ENCODE measurements at regions of chr5 and their contacts with region 1.

Region 1: GRCh38 chr5:170100066-170100943 is 5.4 kb upstream of the FOXI1 start:
- DNase-seq: peak; percentile 80 to 93
- H3K4me3 ChIP-seq: no peak overlapping the region
- H3K27ac ChIP-seq: no peak overlapping the region
- H3K4me1 ChIP-seq: peaks cover 0 to 2% (median 0%) of the 10 kb centered on the region in 4 experiments; a peak in 1 of 7 replicates
- H3K27me3 ChIP-seq: 0 out of 7 replicates have a peak, but pooled peaks cover 0 to 7% (median 0%) of the 10 kb centered on the region in 4 experiments
- CTCF ChIP-seq: peak; percentile 11 to 93 (median 68)
- EP300 ChIP-seq: no peak
- POLR2A ChIP-seq: no peak
- RAD21 ChIP-seq: peak; percentile 94 to 98

Region 2: DNA sequence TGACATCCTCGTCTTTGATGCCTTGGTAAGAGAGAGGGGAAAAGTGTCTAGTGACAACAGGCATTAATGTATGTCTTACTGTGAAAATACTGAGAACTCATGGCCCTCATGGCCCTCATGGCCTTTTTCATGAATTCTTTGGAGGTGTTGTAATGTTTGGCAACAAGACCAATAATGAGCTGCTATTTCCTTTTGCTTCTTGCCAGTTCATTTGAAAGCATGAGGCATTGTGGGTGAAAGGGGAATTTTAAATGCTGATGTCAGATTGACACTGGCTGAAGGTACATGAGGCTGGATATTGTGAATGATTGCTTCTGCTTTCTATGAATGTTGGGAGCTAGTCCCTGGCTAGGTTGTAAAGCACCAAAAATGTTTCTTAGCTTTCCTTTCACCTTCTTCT is 384.0 kb before region 1 on chr5:
- CTCF ChIA-PET with region 1: no interaction called
- POLR2A ChIA-PET with region 1: no interaction called
- DNase-seq: no peak
- H3K4me3 ChIP-seq: no peak overlapping the region
- H3K27ac ChIP-seq: no peak overlapping the region
- H3K4me1 ChIP-seq: no peaks in the 10 kb centered on the region
- H3K27me3 ChIP-seq: no peaks in the 10 kb centered on the region
- CTCF ChIP-seq: no peak
- EP300 ChIP-seq: no peak
- POLR2A ChIP-seq: no peak
- RAD21 ChIP-seq: no peak

Region 3: DNA sequence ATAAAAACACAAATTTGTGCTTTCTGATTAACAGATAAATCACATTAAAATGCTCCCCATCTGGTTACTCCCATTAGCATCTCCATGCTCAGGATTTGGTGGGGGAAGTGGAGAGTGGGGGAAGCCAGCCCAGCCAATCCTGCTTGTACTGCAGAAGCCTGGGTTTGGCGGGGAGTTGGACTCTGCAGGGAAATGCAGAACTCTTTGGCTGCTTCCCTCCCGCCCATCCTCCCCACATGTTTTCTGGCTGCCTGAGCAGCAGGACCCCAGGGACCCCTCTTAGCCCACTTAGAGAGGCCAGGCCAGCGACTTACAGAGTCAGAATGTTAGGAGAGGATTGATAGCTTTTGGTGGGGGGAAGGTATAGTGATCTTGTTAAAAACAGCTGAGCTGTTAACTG is 54.1 kb before region 1 on chr5:
- CTCF ChIA-PET with region 1: no interaction called
- POLR2A ChIA-PET with region 1: no interaction called
- DNase-seq: no peak
- H3K4me3 ChIP-seq: no peak overlapping the region
- H3K27ac ChIP-seq: no peak overlapping the region
- H3K4me1 ChIP-seq: peaks cover 0 to 4% (median 3%) of the 10 kb centered on the region in 4 experiments; a peak in 3 of 7 replicates
- H3K27me3 ChIP-seq: no peaks in the 10 kb centered on the region
- CTCF ChIP-seq: no peak
- EP300 ChIP-seq: no peak
- POLR2A ChIP-seq: no peak
- RAD21 ChIP-seq: no peak

Region 4: DNA sequence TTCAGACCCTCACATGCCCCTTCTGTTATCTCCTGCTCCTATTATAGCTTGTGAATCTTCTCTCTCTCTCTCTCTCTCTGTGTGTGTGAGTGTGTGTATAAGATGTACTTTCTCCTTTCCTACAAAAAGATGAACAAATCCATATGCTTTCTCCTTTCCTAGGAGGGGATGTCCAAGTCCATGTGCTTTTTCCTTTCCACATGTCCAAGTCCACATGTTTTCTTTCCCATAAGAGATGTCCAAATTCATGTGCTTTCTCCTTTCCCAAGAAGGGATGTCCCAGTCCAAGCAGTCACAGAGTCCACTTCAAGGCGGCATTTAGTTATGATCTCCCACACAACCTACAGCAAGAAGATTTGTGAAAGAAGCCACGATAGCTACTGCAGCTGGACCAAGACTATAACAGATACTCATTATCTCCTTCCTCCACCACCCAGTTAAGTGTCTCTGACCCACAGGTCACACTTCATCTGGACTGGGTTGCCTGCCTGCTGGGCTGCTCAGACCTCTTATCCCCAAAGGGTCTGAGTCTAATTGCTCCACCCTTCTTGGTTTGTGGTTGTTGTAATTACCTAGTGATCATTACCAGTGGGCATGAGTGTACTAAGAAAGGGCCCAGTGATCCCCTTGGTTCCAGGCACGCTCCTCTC is 13.0 kb before region 1 on chr5:
- CTCF ChIA-PET with region 1: interaction called, 11 read pairs
- POLR2A ChIA-PET with region 1: no interaction called
- DNase-seq: no peak
- H3K4me3 ChIP-seq: no peak overlapping the region
- H3K27ac ChIP-seq: no peak overlapping the region
- H3K4me1 ChIP-seq: no peaks in the 10 kb centered on the region
- H3K27me3 ChIP-seq: no peaks in the 10 kb centered on the region
- CTCF ChIP-seq: no peak
- EP300 ChIP-seq: no peak
- POLR2A ChIP-seq: no peak
- RAD21 ChIP-seq: no peak

Region 5: DNA sequence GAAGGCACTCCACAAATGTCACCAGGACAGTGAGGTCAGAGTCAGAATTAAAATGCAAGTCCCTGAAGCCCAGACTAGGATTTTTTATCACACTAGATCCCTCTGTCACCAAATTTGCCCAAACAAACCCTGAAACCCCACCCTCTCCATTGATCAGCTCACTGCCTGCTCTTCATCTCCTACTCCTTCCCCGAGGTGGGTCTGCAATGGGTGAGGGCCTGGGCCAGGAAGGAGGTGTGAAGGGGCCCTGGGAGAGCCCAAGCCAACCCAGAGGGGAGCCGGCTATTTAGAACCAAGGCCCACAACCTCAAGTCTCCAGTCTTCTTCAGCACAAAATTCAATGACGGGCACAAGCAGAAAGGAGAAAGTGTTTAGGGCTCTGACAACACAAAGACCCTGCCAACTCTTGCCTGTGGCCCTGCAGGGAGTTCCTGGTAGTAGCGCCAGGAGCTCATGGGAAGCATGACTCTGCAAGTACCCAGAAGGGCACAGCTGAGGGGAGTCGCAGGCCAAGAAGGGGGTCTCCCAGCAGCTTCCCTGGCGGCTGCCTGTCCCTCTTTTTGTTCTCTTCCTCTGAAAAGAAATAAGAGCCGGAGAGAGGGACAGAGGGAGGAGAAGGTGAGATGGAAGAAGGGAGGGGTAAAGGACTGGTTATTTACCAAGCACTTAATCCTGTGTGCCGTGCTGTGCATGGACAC is 10.9 kb after region 1 on chr5:
- CTCF ChIA-PET with region 1: interaction called, 19 read pairs
- POLR2A ChIA-PET with region 1: no interaction called
- DNase-seq: no peak
- H3K4me3 ChIP-seq: no peak overlapping the region
- H3K27ac ChIP-seq: no peak overlapping the region
- H3K4me1 ChIP-seq: peaks cover 2 to 17% (median 9%) of the 10 kb centered on the region in 4 experiments
- H3K27me3 ChIP-seq: peaks cover 0 to 46% (median 21%) of the 10 kb centered on the region in 4 experiments; a peak in 5 of 7 replicates
- CTCF ChIP-seq: no peak
- EP300 ChIP-seq: no peak
- POLR2A ChIP-seq: no peak
- RAD21 ChIP-seq: no peak

Region 6: DNA sequence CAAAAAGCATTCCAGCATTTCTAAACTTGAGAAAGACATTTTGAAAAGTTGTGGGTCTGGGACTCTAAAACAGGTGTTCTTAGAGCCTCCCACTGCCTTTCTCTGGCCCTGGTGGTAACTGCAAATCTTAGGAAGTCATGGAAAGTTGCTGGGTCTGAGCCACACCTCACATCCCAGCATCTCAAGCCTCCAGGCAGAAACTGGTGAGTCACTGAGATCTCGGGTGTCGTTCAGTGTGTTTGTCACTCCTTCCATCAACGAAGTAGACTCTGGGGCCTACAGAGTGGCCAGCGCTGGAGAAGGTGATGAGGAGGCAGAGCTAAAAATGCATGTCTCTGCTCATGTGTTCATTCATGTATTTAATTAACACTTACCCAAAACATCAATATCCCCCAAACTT is 72.9 kb after region 1 on chr5:
- CTCF ChIA-PET with region 1: interaction called, 11 read pairs
- POLR2A ChIA-PET with region 1: no interaction called
- DNase-seq: no peak
- H3K4me3 ChIP-seq: no peak overlapping the region
- H3K27ac ChIP-seq: no peak overlapping the region
- H3K4me1 ChIP-seq: no peaks in the 10 kb centered on the region
- H3K27me3 ChIP-seq: no peaks in the 10 kb centered on the region; a peak in 2 of 7 replicates
- CTCF ChIP-seq: no peak
- EP300 ChIP-seq: no peak
- POLR2A ChIP-seq: no peak
- RAD21 ChIP-seq: no peak

Region 7: GRCh38 chr5:170190436-170191134 is 90.3 kb after region 1 on chr5:
- CTCF ChIA-PET with region 1: interaction called, 217 read pairs
- POLR2A ChIA-PET with region 1: no interaction called
- DNase-seq: no peak
- H3K4me3 ChIP-seq: no peak overlapping the region
- H3K27ac ChIP-seq: no peak overlapping the region
- H3K4me1 ChIP-seq: peaks cover 0 to 6% (median 3%) of the 10 kb centered on the region in 4 experiments; a peak in 3 of 7 replicates
- H3K27me3 ChIP-seq: no peaks in the 10 kb centered on the region
- CTCF ChIP-seq: no peak
- EP300 ChIP-seq: no peak
- POLR2A ChIP-seq: no peak
- RAD21 ChIP-seq: no peak

Region 8: DNA sequence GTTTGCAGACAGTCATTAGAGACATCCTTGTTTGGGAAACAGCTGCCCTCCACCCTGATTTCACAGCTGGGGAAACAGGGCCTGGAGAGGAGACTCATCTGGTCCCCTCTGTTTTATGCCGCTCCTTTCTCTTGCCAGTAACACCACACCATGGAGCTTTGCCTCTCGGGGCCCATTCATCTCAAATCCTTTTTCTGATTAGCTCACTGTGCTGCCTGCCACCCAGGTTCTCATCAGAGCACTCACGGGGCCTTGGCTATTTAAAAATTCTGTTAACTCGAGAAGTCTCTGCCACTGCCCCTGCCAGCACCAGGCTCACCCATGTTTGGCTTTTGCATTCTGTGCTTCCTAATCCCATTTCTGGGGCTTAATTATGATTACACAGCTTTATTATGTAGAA is 95.7 kb after region 1 on chr5:
- CTCF ChIA-PET with region 1: interaction called, 23 read pairs
- POLR2A ChIA-PET with region 1: no interaction called
- DNase-seq: no peak
- H3K4me3 ChIP-seq: no peak overlapping the region
- H3K27ac ChIP-seq: no peak overlapping the region
- H3K4me1 ChIP-seq: no peaks in the 10 kb centered on the region; a peak in 2 of 7 replicates
- H3K27me3 ChIP-seq: no peaks in the 10 kb centered on the region
- CTCF ChIP-seq: no peak
- EP300 ChIP-seq: no peak
- POLR2A ChIP-seq: no peak
- RAD21 ChIP-seq: no peak

Region 9: DNA sequence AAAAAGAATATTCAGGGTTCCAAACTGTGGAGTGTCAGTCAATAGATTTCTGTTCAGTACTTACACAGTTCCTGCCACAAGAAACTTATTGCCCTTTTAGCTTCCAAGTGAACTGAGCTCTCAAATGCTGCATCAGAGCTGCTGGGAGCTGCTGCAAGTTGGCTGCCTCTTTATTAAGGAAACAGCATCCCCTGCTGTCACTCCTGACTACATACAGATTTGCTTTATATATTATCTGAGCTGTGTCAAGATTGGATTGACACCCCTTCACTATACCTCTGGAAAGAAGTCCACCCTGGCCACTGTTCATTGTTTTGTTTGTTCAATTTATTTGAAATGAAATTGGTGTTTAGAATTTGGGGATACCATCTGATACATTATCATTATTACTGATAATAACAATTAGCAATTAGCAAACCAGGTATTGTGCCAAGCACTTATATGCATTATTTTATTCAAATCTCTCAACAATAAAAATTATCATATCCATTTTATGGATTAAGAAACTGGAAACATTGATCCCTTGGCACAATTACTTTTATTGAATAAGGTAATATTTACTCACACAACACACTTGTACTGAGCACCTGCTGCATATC is 116.1 kb after region 1 on chr5:
- CTCF ChIA-PET with region 1: interaction called, 43 read pairs
- POLR2A ChIA-PET with region 1: no interaction called
- DNase-seq: no peak
- H3K4me3 ChIP-seq: no peak overlapping the region
- H3K27ac ChIP-seq: no peak overlapping the region
- H3K4me1 ChIP-seq: peaks cover 0 to 6% (median 1%) of the 10 kb centered on the region in 4 experiments; a peak in 2 of 7 replicates
- H3K27me3 ChIP-seq: peaks cover 0 to 19% (median 5%) of the 10 kb centered on the region in 4 experiments; a peak in 5 of 7 replicates
- CTCF ChIP-seq: peak; percentile 22 to 83 (median 76)
- EP300 ChIP-seq: no peak
- POLR2A ChIP-seq: no peak
- RAD21 ChIP-seq: peak; percentile 97

Measured in H1 (cell line).